ENCODE measurements at regions of chr19 and their contacts with region 1.

Region 1: GRCh38 chr19:56525214-56525860 is 13.4 kb upstream of the ZFP28 start:
- DNase-seq: no peak
- H3K4me3 ChIP-seq: no peak overlapping the region
- H3K27ac ChIP-seq: no peak overlapping the region
- H3K4me1 ChIP-seq: no peaks in the 10 kb centered on the region
- H3K27me3 ChIP-seq: no peaks in the 10 kb centered on the region
- CTCF ChIP-seq: no peak
- POLR2A ChIP-seq: no peak

Region 2: GRCh38 chr19:56367829-56368711 is 157.3 kb before region 1 on chr19:
- intact Hi-C with region 1: no loop called
- DNase-seq: peak; percentile 98
- H3K4me3 ChIP-seq: peak overlapping the region; percentile 36 to 52 (median 44)
- H3K27ac ChIP-seq: peak overlapping the region; percentile 66 to 76 (median 71)
- H3K4me1 ChIP-seq: peaks cover 13 to 15% of the 10 kb centered on the region in 2 donors
- H3K27me3 ChIP-seq: no peaks in the 10 kb centered on the region
- CTCF ChIP-seq: peak in 2 of 6 experiments; percentile 21 to 33
- POLR2A ChIP-seq: peak in 1 of 2 donors; percentile 80

Region 3: GRCh38 chr19:56423276-56423984 is 101.9 kb before region 1 on chr19:
- intact Hi-C with region 1: loop called (anchors 10 kb)
- DNase-seq: no peak
- H3K4me3 ChIP-seq: no peak overlapping the region
- H3K27ac ChIP-seq: no peak overlapping the region
- H3K4me1 ChIP-seq: no peaks in the 10 kb centered on the region
- H3K27me3 ChIP-seq: no peaks in the 10 kb centered on the region
- CTCF ChIP-seq: no peak
- POLR2A ChIP-seq: no peak

Region 4: DNA sequence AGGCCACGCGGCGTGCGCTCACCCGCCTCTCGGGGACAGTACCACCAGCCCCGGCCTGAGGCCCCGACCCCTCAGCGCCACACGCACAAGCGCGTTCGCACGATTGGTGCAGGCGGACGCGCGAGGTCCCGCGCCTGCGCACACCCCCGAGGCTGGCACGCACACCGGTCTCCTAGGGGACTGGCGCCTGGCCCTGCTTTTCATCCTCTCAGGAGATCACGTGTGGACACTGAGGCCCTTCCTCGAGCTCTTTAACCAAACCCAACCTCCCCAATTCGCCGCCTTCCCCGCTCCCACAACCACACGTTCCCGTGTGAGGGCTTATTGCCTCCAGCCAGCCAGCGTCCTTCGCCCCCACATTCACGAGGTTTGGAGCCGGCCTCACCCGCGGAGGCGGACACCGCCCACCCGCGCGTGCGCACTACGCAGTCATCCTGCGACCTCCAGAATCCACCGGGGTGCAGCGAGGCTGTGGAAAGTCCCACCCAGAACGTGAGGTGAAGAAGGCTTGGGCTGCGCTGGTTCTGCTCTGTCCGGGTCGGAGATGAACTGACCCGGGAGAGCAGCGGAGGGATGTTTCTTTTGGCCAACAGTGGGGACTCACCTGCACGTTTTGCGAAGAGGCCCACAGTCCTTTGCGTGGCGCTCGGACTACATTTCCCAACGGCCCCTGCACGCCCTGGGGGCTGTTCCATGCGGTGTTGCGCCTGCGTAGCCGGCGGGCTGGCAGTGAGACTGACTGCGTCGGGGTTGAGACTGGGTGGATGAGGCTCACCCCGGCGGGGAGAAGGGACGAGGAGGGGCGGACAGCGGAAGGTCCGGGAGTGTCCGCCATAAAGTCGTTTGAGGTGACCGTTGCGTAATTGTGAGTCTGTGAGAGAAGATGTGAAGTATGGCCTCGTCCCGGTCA is 47.7 kb before region 1 on chr19:
- intact Hi-C with region 1: no loop called
- DNase-seq: peak; percentile 92 to 94
- H3K4me3 ChIP-seq: peak overlapping the region; percentile 32 to 89 (median 79)
- H3K27ac ChIP-seq: peak overlapping the region; percentile 34 to 81 (median 70)
- H3K4me1 ChIP-seq: peaks cover 17 to 19% of the 10 kb centered on the region in 2 donors
- H3K27me3 ChIP-seq: no peaks in the 10 kb centered on the region
- CTCF ChIP-seq: no peak
- POLR2A ChIP-seq: peak in 1 of 2 donors; percentile 70